Adrenal gland (tissue), 19 donors: ENCODE measurements at regions of chr16 and their contacts with region 1.

Region 1: GRCh38 chr16:77171745-77172635 is 19.0 kb upstream of the MON1B start:
- DNase-seq: peak in 4 of 7 donors; percentile 38 to 53 (median 44)
- H3K4me3 ChIP-seq: no peak overlapping the region
- H3K27ac ChIP-seq: no peak overlapping the region
- H3K4me1 ChIP-seq: no peaks in the 10 kb centered on the region
- H3K27me3 ChIP-seq: peaks cover 3% of the 10 kb centered on the region
- CTCF ChIP-seq: peak; percentile 58 to 80 (median 75)
- POLR2A ChIP-seq: no peak

Region 2: GRCh38 chr16:75794426-75794825 is 1377.6 kb before region 1 on chr16:
- intact Hi-C with region 1: loop called in 1 of 2 experiments (anchors 5 kb)
- DNase-seq: no peak
- H3K4me3 ChIP-seq: no peak overlapping the region
- H3K27ac ChIP-seq: no peak overlapping the region
- H3K4me1 ChIP-seq: no peaks in the 10 kb centered on the region
- H3K27me3 ChIP-seq: no peaks in the 10 kb centered on the region
- CTCF ChIP-seq: no peak
- POLR2A ChIP-seq: no peak

Region 3: DNA sequence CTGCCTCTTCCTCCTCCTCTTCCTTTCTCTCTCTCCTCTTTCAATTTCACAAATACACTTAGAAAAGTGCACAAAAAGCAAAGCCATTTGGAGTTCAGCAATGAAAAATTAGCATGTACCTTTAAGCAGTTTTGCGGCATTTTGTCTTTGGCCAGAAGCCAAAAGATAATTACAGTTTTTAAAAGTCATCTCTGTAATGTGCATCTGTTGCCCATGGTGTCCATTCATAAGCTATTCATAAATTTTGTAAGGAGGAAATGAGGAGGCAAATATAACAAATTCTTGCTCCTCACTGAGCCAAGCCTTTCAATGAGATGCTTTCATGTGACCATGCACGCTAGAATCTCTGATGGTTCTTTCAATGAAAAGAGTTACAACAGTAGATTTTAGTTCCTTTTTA is 228.1 kb before region 1 on chr16:
- intact Hi-C with region 1: no loop called
- DNase-seq: no peak
- H3K4me3 ChIP-seq: no peak overlapping the region
- H3K27ac ChIP-seq: no peak overlapping the region
- H3K4me1 ChIP-seq: peaks cover 8 to 15% of the 10 kb centered on the region in 2 donors
- H3K27me3 ChIP-seq: no peaks in the 10 kb centered on the region
- CTCF ChIP-seq: no peak
- POLR2A ChIP-seq: no peak